Transverse colon (tissue), 4 donors: ENCODE measurements at regions of chr7 and their contacts with region 1.

Region 1: GRCh38 chr7:46450886-46451285 is 529.8 kb upstream of the IGFBP3 start:
- DNase-seq: no peak
- H3K4me3 ChIP-seq: no peak overlapping the region
- H3K27ac ChIP-seq: no peak overlapping the region
- H3K4me1 ChIP-seq: no peaks in the 10 kb centered on the region
- H3K27me3 ChIP-seq: no peaks in the 10 kb centered on the region
- CTCF ChIP-seq: no peak
- EP300 ChIP-seq: no peak
- POLR2A ChIP-seq: no peak

Region 2: GRCh38 chr7:46432666-46433065 is 18.2 kb before region 1 on chr7:
- in situ Hi-C with region 1: no loop called
- intact Hi-C with region 1: loop called (anchors 1 kb)
- DNase-seq: no peak
- H3K4me3 ChIP-seq: no peak overlapping the region
- H3K27ac ChIP-seq: no peak overlapping the region
- H3K4me1 ChIP-seq: no peaks in the 10 kb centered on the region
- H3K27me3 ChIP-seq: no peaks in the 10 kb centered on the region
- CTCF ChIP-seq: no peak
- EP300 ChIP-seq: no peak
- POLR2A ChIP-seq: no peak